ENCODE measurements at regions of chr2 and their contacts with region 1.

Region 1: DNA sequence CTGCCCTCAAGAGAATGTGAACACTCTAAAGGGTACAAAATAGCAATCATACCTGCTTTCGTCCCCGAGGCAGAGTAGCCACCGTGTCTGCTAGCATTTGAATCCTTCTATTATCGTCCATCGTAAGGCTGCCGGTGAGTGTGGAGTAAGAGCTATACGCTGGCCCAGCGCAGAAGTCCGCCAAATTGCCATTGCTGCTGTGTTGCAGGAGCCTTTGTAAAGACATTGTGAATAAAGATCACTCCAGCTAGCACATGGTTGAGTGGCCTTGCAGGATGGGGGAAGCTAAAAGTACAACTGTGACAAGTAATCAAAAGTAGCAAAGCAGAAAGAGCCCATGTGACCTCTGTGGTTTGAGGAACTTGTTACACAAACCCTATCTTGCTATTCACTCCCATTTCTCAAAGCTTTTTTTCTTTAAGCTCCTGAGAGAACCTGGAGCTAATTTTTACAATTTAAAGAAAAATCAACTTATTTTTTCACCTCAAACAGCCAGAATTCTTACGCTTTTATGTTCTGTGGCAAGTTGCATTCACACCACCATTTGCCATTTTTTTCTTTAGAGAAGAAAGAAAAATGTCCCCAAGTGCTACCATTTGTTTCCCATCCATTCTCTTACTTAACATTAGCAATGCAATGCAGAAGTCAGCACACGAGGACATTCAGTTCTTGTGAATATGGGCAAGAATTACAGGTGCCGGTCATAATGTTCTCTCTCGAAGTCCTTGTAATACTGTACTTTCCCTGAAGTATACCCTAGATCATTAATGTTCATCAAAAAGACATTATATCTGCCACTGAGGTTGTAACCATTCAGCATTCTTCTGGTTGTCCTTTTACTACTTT is at the start of gene CYTIP:
- DNase-seq: peak; percentile 87
- ATAC-seq: peak; percentile 45
- H3K4me3 Mint-ChIP-seq: peak within 1 kb of the TSS; percentile 94
- H3K27ac Mint-ChIP-seq: peak within 1 kb of the TSS; percentile 92
- H3K4me1 Mint-ChIP-seq: peaks cover 33% of the 10 kb centered on the region
- H3K27me3 Mint-ChIP-seq: no peaks in the 10 kb centered on the region
- total RNA-seq, gene CYTIP: 222 to 227 TPM

Region 2: DNA sequence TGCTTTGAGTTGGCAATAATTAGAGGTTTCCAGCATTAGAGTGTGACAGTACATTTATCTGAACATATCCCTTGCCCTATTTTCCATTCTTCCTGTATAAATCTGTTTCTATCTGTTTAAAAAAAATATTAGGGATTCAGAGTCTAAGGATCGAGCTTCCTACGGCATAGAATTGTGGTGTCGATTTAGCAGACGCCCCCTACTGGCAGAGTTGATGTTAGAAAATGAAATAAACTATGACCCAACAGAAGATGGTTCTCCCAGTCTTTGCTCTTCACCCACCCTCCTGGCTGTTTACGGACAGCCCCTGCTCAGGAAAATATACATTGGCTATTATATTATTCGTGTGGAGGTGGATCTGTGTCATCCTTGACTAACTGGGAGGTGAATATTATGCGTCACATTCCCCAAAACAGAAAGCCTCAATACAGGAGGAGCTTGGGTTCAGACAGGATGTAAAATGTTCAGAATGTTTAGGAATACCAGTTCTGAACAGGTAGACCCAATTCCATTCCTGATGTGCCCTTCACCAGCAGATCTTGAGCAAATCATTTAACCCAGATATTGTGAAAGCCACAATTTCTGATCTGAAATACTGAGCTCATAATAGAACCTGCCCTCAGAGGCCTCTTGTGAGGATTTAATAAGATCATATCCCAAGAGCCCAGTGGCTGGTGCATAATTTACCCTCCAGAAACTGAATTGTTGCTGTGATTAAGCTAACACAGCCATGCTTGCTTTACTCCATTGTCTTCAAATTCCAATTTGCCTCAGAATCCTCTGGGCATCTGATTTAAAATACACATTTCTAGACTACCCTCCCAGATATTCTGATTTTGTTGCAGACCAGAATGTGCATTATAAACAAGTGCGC is 107.6 kb before region 1 on chr2:
- CTCF ChIA-PET with region 1: interaction called, 12 read pairs
- POLR2A ChIA-PET with region 1: interaction called, 3 read pairs
- DNase-seq: peak; percentile 61
- ATAC-seq: no peak
- H3K4me3 Mint-ChIP-seq: no peak overlapping the region
- H3K27ac Mint-ChIP-seq: no peak overlapping the region
- H3K4me1 Mint-ChIP-seq: peaks cover 41% of the 10 kb centered on the region
- H3K27me3 Mint-ChIP-seq: no peaks in the 10 kb centered on the region

Region 3: DNA sequence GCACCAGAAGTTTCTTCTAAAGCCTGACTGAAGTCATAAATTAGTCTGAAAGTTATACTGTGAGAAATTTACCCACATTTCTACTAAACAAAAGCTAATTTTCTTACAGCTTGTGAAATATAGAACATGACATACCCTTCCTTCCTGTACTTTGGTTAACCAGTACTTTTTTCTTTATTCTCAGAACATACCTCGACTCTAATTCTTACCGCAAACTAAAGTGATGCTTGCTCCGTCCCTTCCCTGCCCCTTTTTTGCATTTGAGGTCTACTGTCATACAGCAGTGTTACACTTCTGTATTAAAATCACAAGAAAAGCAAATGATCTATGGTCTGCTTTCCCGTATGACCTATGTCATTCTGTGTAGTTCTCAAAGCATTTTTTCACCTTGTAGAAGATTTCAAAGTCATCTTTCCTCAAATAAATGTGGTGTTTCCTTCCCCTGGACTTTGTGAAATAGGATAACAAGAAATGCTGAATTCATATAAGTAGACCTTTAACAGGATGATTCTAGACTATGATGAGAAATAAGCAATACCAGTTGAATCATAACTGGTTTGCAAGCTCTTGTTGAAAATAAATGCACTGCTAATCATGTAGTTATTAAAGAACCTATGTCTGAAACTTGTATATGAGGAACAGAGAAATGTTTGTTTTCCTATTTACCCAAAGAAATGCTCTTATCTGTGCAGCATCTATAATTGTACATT is 30.5 kb before region 1 on chr2:
- CTCF ChIA-PET with region 1: interaction called, 5 read pairs
- POLR2A ChIA-PET with region 1: interaction called, 144 read pairs
- DNase-seq: peak; percentile 79
- ATAC-seq: peak; percentile 84
- H3K4me3 Mint-ChIP-seq: peak overlapping the region; percentile 60
- H3K27ac Mint-ChIP-seq: peak overlapping the region; percentile 86
- H3K4me1 Mint-ChIP-seq: peaks cover 83% of the 10 kb centered on the region
- H3K27me3 Mint-ChIP-seq: no peaks in the 10 kb centered on the region

Region 4: DNA sequence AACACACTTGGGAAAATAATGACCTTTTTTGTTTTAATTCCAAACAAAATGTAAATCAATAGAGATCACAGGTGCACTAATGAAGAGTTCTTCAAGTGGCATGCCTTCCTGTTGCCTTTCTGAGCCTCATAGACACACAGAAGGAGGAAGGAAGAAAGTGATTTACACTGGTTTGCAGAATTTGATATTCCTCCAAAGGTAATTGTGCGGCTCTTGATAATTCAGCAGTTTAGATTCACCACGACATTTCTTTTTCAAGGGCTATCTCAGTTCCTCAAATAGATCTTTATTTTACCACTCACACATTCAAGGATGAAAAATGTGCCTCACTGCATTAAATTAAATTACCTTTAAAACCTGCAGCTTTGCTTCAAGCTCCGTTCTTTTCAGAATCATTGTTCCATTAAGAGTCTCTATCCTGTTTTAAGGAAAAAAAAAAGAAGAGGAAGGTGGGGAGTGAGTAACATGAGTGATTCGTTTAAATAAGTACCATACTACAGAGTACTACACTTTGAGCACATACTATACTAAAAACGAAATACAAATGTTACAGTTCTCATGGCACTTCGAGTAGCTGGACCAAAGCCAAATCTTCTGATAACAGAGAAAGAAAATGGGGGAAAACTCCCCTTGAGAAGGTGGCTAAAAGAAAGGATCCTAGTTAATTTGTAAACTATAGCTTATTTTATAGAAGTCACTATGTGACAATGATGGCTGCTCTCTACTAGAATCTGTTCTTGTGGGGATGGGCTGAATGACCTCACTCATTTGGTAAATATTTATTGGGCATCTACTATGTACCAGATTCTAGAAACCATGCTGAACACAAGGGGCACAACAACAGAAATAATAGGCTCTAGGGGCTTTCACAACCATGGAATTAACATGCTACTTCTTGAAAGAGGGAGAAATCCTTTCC is 16.8 kb before region 1 on chr2:
- CTCF ChIA-PET with region 1: interaction called, 9 read pairs
- POLR2A ChIA-PET with region 1: interaction called, 144 read pairs
- DNase-seq: no peak
- ATAC-seq: no peak
- H3K4me3 Mint-ChIP-seq: peak overlapping the region; percentile 23
- H3K27ac Mint-ChIP-seq: peak overlapping the region; percentile 64
- H3K4me1 Mint-ChIP-seq: peaks cover 80% of the 10 kb centered on the region
- H3K27me3 Mint-ChIP-seq: no peaks in the 10 kb centered on the region

Region 5: GRCh38 chr2:157460384-157460837 is 16.4 kb after region 1 on chr2:
- CTCF ChIA-PET with region 1: interaction called, 40 read pairs
- POLR2A ChIA-PET with region 1: interaction called, 258 read pairs
- DNase-seq: no peak
- ATAC-seq: no peak
- H3K4me3 Mint-ChIP-seq: no peak overlapping the region
- H3K27ac Mint-ChIP-seq: peak overlapping the region; percentile 36
- H3K4me1 Mint-ChIP-seq: peaks cover 89% of the 10 kb centered on the region
- H3K27me3 Mint-ChIP-seq: no peaks in the 10 kb centered on the region

Region 6: DNA sequence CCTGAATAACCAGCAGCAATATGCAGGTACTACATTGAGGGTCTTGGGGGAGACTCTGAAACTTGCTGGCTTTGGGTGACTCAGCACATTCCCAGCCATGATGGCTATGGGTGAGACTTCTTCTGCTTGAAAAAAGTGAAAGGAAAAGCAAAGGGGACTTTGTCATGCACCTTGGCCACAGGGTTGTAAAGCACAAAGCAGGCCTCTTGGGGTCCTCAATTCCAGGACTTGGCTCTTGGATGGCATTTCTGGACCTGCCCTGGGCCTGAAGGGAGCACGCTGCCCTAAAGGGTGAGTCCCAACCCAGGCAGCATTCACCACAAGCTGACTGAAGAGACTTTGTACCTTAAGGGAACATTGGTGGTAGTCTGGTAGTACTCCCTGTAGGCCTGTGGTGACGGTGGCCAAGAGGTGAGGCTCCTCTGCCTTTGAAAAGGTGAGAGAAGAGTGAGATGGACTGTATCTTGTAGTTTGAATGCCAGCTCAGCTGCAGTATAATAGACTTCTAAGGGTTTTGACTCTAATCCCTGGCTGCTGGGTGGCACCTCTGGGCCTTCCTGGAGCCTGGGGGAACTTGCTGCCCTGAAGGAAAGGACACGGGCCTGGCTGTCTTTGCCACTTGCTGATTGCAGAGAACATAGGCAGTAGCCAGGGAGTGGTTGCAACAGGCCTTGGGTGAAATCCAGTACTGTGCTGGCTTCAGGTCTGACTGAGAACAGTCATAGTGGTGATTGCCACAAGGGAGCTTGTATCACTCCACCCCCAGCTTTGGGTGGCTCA is 36.4 kb after region 1 on chr2:
- CTCF ChIA-PET with region 1: interaction called, 26 read pairs
- POLR2A ChIA-PET with region 1: interaction called, 123 read pairs
- DNase-seq: peak; percentile 57
- ATAC-seq: peak; percentile 32
- H3K4me3 Mint-ChIP-seq: peak overlapping the region; percentile 80
- H3K27ac Mint-ChIP-seq: peak overlapping the region; percentile 98
- H3K4me1 Mint-ChIP-seq: peaks cover 79% of the 10 kb centered on the region
- H3K27me3 Mint-ChIP-seq: no peaks in the 10 kb centered on the region

Region 7: DNA sequence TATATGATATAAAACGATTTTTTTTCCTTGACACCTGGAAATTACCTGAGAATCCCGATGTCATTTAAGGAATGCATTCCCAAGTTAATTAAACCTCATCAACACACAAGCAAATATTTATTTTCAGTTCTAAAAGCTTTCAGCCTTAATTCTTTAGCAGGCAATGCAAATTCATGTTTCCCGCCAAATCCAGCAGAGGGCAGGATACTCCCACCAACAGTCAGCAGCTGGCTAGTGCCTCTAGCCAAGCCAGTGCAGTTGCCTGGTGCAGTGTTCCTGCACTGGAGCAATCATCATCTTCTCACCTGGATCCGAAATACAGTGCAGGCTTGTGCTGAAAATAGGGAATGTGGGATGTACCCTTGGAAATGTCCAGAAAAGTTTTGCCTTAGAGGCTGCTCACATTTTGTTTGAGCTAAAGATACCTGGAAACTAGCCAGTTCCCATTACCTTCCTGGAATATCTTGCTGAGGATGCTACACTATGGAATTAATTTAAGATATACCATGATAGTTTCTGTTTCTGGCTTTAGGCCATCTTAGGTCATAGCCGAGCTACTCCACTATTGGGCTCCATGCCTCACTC is 48.3 kb after region 1 on chr2:
- CTCF ChIA-PET with region 1: interaction called, 17 read pairs
- POLR2A ChIA-PET with region 1: interaction called, 16 read pairs
- DNase-seq: peak; percentile 85
- ATAC-seq: peak; percentile 85
- H3K4me3 Mint-ChIP-seq: no peak overlapping the region
- H3K27ac Mint-ChIP-seq: no peak overlapping the region
- H3K4me1 Mint-ChIP-seq: peaks cover 66% of the 10 kb centered on the region
- H3K27me3 Mint-ChIP-seq: no peaks in the 10 kb centered on the region